MCF 10A (cell line): ENCODE measurements at regions of chr4 and their contacts with region 1.

Region 1: DNA sequence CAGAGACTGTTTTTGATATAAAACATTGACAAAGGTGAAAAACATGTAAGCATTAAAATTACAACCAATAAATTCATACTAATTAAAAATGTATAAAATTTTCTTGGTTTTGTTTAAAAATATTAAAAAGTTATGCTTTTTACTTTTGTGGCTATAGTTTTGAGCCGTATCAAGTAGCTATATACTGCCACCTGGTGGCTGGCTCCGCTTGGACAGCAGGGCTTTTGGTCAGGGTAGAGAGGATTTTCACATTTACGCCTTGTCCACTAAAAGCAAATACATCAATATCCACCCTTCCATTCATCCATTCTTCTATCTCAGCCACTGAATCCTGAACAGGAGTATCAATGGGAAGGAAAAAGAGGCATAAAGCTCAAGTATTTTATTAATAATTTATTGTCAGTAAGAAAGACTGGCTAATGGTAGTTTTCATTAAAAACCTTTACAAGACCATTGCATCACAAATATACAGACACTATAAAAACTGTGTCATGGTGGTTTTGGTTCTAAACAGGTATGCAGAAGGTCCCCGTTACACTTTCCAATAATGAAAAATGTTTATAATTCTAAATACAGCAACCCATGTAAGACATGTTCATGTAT is 32.1 kb upstream of the MTNR1A start:
- DNase-seq: peak; percentile 69
- H3K4me3 Mint-ChIP-seq: no peak overlapping the region
- H3K27ac Mint-ChIP-seq: no peak overlapping the region
- H3K4me1 Mint-ChIP-seq: no peaks in the 10 kb centered on the region
- H3K27me3 Mint-ChIP-seq: no peaks in the 10 kb centered on the region
- CTCF ChIP-seq: peak; percentile 73

Region 2: DNA sequence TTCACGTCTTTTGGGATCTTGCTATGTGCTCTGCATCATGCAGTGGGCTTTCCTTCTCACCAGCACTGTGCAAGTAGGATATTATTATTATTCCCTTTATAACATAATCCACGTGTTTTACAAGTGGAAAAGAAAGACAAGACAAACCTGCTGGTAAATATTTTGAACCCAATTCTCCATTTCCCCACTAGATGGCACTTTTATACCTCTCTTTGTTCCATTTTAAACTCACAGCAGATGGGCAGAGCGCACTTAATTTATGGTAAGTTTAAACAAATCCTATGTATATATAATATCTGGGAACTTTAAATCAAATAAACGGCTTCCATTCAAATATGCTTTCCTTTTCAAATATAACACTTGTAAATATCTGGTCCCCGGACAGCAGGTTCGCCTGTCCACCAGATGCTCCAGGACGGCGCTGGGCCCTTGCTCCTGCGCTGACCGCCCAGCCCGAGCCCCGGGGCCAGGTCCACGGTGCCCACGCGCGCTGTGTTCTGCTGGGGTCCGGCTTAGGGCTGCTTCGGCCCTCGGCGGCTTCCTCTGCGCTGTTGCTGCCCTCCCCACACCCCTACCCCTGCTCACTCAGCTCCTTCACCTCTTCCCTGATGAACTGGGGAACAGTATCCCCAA is 290.4 kb before region 1 on chr4:
- CTCF ChIA-PET with region 1: interaction called, 204 read pairs
- POLR2A ChIA-PET with region 1: interaction called, 3 read pairs
- intact Hi-C with region 1: loop called (anchors 1 kb)
- DNase-seq: peak; percentile 62
- H3K4me3 Mint-ChIP-seq: no peak overlapping the region
- H3K27ac Mint-ChIP-seq: no peak overlapping the region
- H3K4me1 Mint-ChIP-seq: no peaks in the 10 kb centered on the region
- H3K27me3 Mint-ChIP-seq: no peaks in the 10 kb centered on the region
- CTCF ChIP-seq: peak; percentile 68

Region 3: GRCh38 chr4:186307497-186307896 is 280.0 kb before region 1 on chr4:
- CTCF ChIA-PET with region 1: interaction called, 204 read pairs
- POLR2A ChIA-PET with region 1: no interaction called
- intact Hi-C with region 1: no loop called
- DNase-seq: no peak
- H3K4me3 Mint-ChIP-seq: no peak overlapping the region
- H3K27ac Mint-ChIP-seq: no peak overlapping the region
- H3K4me1 Mint-ChIP-seq: no peaks in the 10 kb centered on the region
- H3K27me3 Mint-ChIP-seq: peaks cover 17% of the 10 kb centered on the region
- CTCF ChIP-seq: no peak

Region 4: DNA sequence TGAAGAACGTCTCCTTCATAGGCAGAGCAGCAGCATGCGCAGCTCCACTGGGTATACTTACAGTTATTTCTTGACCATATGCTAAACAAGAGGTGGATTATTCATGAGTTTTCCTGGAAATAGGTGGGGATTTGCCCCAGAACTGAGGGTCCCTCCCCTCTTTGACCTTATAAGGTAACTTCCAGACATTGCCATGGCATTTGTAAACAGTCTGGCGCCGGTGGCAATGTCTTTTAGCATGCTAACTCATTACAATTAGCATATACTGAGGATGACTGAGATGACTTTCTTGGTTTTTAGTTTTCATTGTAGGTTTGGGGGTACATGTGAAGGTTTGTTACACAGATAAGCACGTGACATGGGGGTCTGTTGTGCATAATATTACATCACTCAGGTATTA is 129.5 kb before region 1 on chr4:
- CTCF ChIA-PET with region 1: no interaction called
- POLR2A ChIA-PET with region 1: no interaction called
- intact Hi-C with region 1: no loop called
- DNase-seq: no peak
- H3K4me3 Mint-ChIP-seq: no peak overlapping the region
- H3K27ac Mint-ChIP-seq: no peak overlapping the region
- H3K4me1 Mint-ChIP-seq: no peaks in the 10 kb centered on the region
- H3K27me3 Mint-ChIP-seq: no peaks in the 10 kb centered on the region
- CTCF ChIP-seq: no peak

Region 5: GRCh38 chr4:186472948-186473347 is 114.6 kb before region 1 on chr4:
- CTCF ChIA-PET with region 1: interaction called, 41 read pairs
- POLR2A ChIA-PET with region 1: interaction called, 7 read pairs
- intact Hi-C with region 1: loop called (anchors 1 kb)
- DNase-seq: peak; percentile 56
- H3K4me3 Mint-ChIP-seq: no peak overlapping the region
- H3K27ac Mint-ChIP-seq: no peak overlapping the region
- H3K4me1 Mint-ChIP-seq: no peaks in the 10 kb centered on the region
- H3K27me3 Mint-ChIP-seq: no peaks in the 10 kb centered on the region
- CTCF ChIP-seq: peak; percentile 52

Region 6: DNA sequence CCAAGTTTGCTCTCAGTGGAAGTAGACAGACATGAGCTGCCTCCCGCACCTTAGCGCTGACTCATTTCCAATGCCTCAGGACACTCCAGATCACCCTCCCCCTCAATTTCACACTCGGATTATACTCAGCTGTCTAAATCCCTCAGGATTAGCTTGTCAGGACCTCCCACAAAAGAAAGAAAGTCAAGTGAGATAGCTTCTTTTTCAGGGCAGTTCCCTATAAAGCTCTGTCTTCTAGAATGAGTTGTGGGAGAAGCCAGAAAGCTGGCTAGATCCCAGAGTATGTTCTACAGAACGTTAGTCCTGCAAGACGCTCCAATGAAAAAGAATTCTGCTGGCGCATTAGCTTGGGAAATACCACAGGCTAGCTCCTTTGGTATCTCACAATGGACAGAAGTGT is 19.1 kb after region 1 on chr4:
- CTCF ChIA-PET with region 1: interaction called, 16 read pairs
- POLR2A ChIA-PET with region 1: no interaction called
- intact Hi-C with region 1: no loop called
- DNase-seq: peak; percentile 80
- H3K4me3 Mint-ChIP-seq: no peak overlapping the region
- H3K27ac Mint-ChIP-seq: peak overlapping the region; percentile 58
- H3K4me1 Mint-ChIP-seq: peaks cover 19% of the 10 kb centered on the region
- H3K27me3 Mint-ChIP-seq: no peaks in the 10 kb centered on the region
- CTCF ChIP-seq: no peak

Region 7: GRCh38 chr4:186669159-186669731 is 81.7 kb after region 1 on chr4:
- CTCF ChIA-PET with region 1: no interaction called
- POLR2A ChIA-PET with region 1: no interaction called
- intact Hi-C with region 1: no loop called
- DNase-seq: peak; percentile 56
- H3K4me3 Mint-ChIP-seq: peak overlapping the region; percentile 17
- H3K27ac Mint-ChIP-seq: peak overlapping the region; percentile 63
- H3K4me1 Mint-ChIP-seq: peaks cover 34% of the 10 kb centered on the region
- H3K27me3 Mint-ChIP-seq: no peaks in the 10 kb centered on the region
- CTCF ChIP-seq: peak; percentile 18

Region 8: DNA sequence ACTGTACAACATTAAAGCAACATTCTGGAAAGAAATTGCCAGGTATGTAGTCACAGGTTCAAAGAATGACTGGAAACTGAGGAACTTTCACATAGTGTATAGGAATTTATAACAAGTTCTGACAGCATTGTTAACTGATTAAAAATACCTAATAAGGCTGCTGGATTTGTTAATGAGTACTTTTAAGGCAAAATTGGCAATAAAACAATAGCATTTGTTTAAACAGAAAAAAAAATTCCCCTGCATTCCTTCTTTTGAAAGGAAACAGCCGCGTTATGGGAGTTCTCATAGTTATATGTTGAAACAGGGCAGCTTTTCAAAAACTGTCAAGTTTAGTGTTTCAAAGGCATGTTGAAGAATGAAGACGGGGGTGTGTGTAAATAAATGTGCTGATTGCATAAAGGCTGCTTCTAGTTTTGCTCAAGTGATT is 418.7 kb after region 1 on chr4:
- CTCF ChIA-PET with region 1: no interaction called
- POLR2A ChIA-PET with region 1: no interaction called
- intact Hi-C with region 1: no loop called
- DNase-seq: peak; percentile 51
- H3K4me3 Mint-ChIP-seq: peak overlapping the region; percentile 13
- H3K27ac Mint-ChIP-seq: peak overlapping the region; percentile 38
- H3K4me1 Mint-ChIP-seq: peaks cover 6% of the 10 kb centered on the region
- H3K27me3 Mint-ChIP-seq: no peaks in the 10 kb centered on the region
- CTCF ChIP-seq: no peak